Lower leg skin (tissue), 4 donors: ENCODE measurements at regions of chr10 and their contacts with region 1.

Region 1: GRCh38 chr10:43292755-43293676 is 26.2 kb upstream of the RASGEF1A start:
- DNase-seq: peak; percentile 45 to 88
- H3K4me3 ChIP-seq: no peak overlapping the region
- CTCF ChIP-seq: no peak
- POLR2A ChIP-seq: no peak

Region 2: DNA sequence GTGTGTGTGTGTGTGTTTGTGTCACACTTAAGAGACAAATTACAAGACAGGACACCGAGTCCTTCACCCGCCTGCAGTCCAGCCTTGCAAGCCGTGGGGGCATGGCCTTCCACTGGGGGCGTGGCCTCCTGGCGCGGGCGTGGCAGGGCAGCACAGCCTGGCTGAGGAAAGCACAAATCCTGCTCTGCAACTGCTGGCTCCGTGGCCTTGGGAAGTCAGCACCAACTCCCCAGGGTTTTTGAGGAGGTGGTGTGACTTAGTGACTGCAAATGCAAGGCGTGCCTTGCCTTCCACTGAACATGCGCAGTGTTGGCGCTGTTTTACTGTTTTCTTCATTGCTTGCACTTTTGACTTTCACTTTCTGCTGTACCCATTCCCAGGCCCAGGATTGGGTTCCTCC is 523.4 kb before region 1 on chr10:
- intact Hi-C with region 1: no loop called
- DNase-seq: no peak
- H3K4me3 ChIP-seq: no peak overlapping the region
- CTCF ChIP-seq: no peak
- POLR2A ChIP-seq: no peak

Region 3: GRCh38 chr10:42809670-42810069 is 483.3 kb before region 1 on chr10:
- intact Hi-C with region 1: no loop called
- DNase-seq: no peak
- H3K4me3 ChIP-seq: no peak overlapping the region
- CTCF ChIP-seq: no peak
- POLR2A ChIP-seq: no peak

Region 4: DNA sequence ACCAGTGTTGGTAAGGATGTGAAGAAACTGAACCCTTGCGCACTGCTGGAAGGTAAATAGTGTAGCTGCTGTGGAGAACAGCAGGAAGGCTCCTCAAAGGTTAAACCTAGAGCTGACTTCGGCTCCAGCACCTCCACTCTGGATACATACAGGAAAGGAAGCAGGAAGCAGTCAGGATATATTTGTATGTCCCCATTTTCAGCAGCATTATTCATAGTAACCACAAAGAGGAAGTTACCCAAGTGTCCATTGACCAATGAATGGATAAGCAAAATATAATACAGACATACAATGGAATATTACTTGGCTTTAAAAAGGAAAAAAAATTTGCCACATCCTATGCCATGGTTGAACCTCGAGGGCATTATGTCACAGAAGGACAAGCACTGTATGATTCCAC is 201.2 kb before region 1 on chr10:
- intact Hi-C with region 1: no loop called
- DNase-seq: no peak
- H3K4me3 ChIP-seq: no peak overlapping the region
- CTCF ChIP-seq: no peak
- POLR2A ChIP-seq: no peak

Region 5: GRCh38 chr10:43348511-43349312 is 55.7 kb after region 1 on chr10:
- intact Hi-C with region 1: loop called (anchors 10 kb)
- DNase-seq: peak; percentile 81 to 97
- H3K4me3 ChIP-seq: no peak overlapping the region
- CTCF ChIP-seq: peak in 1 of 3 donors; percentile 40
- POLR2A ChIP-seq: no peak

Region 6: DNA sequence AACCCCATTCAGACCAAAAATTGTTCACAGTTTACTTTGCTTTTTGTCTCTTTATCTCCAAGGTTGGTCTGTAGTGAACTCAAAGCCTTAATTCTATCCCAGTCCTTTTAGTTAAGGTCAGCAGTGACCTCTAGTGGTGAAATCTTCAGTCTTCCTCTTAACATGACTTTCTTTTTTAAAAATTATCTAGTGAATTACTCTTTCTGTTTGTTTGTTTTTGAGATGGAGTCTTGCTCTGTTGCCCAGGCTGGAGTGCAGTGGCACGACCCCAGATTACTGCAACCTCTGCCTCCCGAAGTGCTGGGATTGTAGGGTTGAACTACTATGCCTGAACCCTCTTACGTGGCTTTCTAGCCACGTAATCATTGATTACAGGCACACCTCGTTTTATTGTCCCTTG is 168.9 kb after region 1 on chr10:
- intact Hi-C with region 1: loop called (anchors 10 kb)
- DNase-seq: no peak
- H3K4me3 ChIP-seq: no peak overlapping the region
- CTCF ChIP-seq: no peak
- POLR2A ChIP-seq: no peak